IMR-90 (cell line): ENCODE measurements at regions of chr9 and their contacts with region 1.

Region 1: GRCh38 chr9:19230356-19231125 is at the start of gene DENND4C:
- DNase-seq: peak; percentile 78
- ATAC-seq: peak; percentile 92
- H3K4me3 ChIP-seq: peak within 1 kb of the TSS; percentile 97
- H3K27ac ChIP-seq: peak within 1 kb of the TSS; percentile 97
- H3K4me1 ChIP-seq: peaks cover 3% of the 10 kb centered on the region
- H3K27me3 ChIP-seq: no peaks in the 10 kb centered on the region
- CTCF ChIP-seq: peak; percentile 22; the same call in 1 of the 2 replicates
- POLR2A ChIP-seq: peak; percentile 81
- RAD21 ChIP-seq: no peak
- total RNA-seq, gene DENND4C: 32.6 and 48.0 TPM in 2 replicates

Region 2: GRCh38 chr9:18347386-18348082 is 883.0 kb before region 1 on chr9:
- CTCF ChIA-PET with region 1: no interaction called
- POLR2A ChIA-PET with region 1: no interaction called
- dilution Hi-C with region 1: no loop called
- in situ Hi-C with region 1: no loop called
- intact Hi-C with region 1: no loop called
- DNase-seq: no peak
- ATAC-seq: no peak
- H3K4me3 ChIP-seq: no peak overlapping the region
- H3K27ac ChIP-seq: no peak overlapping the region
- H3K4me1 ChIP-seq: no peaks in the 10 kb centered on the region
- H3K27me3 ChIP-seq: no peaks in the 10 kb centered on the region
- CTCF ChIP-seq: no peak
- POLR2A ChIP-seq: no peak
- RAD21 ChIP-seq: no peak

Region 3: GRCh38 chr9:19184144-19184917 is 46.2 kb before region 1 on chr9:
- CTCF ChIA-PET with region 1: interaction called, 3 read pairs
- POLR2A ChIA-PET with region 1: no interaction called
- dilution Hi-C with region 1: no loop called
- in situ Hi-C with region 1: no loop called
- intact Hi-C with region 1: loop called (anchors 1 kb)
- DNase-seq: peak; percentile 90
- ATAC-seq: peak; percentile 96
- H3K4me3 ChIP-seq: no peak overlapping the region; the same call in 1 of the 2 replicates
- H3K27ac ChIP-seq: peak overlapping the region; percentile 97
- H3K4me1 ChIP-seq: peaks cover 13% of the 10 kb centered on the region
- H3K27me3 ChIP-seq: no peaks in the 10 kb centered on the region
- CTCF ChIP-seq: no peak
- POLR2A ChIP-seq: no peak
- RAD21 ChIP-seq: no peak